ENCODE measurements at regions of chr6 and their contacts with region 1.

Region 1: GRCh38 chr6:144013486-144013909 is 5.4 kb upstream of the PLAGL1 start:
- DNase-seq: peak; percentile 70 to 73 (median 71)
- ATAC-seq: peak; percentile 81 to 89 (median 86)
- H3K4me3 ChIP-seq: no peak overlapping the region
- H3K27ac ChIP-seq: no peak overlapping the region
- H3K4me1 ChIP-seq: no peaks in the 10 kb centered on the region
- H3K27me3 ChIP-seq: no peaks in the 10 kb centered on the region
- CTCF ChIP-seq: peak; percentile 85 to 95 (median 90)
- POLR2A ChIP-seq: no peak

Region 2: DNA sequence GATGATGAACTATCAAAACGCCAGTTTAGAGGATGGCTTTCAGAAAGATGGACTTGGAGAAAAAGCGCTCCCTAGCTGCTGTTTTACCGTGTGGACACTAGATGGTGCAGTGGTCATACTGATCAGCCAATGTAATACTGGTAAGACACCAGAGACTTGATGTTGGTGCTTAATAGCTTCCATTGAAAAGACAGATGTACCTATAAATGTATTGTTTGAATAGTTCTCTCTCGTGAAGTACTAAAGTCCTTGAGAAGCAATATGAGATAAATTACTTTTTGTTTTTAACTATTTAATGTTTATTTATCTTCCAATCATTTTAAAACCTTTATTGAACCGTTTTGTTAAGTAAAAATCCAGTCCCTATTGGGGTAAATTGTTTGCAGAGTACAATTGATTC is 438.1 kb before region 1 on chr6:
- intact Hi-C with region 1: loop called in 1 of 2 experiments (anchors 5 kb)
- DNase-seq: peak in 1 of 3 donors; percentile 58
- ATAC-seq: peak; percentile 94 to 99 (median 98)
- H3K4me3 ChIP-seq: no peak overlapping the region
- H3K27ac ChIP-seq: no peak overlapping the region
- H3K4me1 ChIP-seq: no peaks in the 10 kb centered on the region
- H3K27me3 ChIP-seq: no peaks in the 10 kb centered on the region
- CTCF ChIP-seq: peak; percentile 84 to 97 (median 89)
- POLR2A ChIP-seq: no peak

Region 3: DNA sequence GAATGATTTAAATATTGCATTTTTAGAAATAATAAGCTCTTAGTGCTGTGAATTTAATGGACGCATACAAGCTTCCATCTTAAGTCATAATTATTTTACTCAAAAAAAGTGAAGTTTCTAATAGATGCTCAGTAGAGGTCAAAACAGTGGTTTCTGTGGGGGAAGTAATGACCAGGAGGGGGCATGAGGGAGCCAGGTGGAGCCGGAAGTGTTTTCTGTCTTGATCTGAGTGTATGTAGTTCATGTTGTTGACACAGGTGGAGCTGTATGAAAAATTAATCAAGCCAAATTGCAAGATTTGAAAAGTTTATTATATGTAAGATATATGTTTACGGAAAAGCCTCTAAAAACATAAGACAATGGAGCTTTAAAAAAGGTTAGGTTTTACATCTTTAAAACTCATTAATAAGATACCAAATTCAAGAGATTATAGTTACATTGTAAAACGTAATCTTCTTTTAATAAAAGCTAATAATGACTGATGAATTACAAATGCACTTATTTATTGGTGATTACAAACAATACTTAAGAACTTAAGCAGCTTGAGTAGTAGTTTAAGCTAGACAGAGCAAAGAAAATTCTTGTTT is 73.4 kb before region 1 on chr6:
- intact Hi-C with region 1: loop called in 1 of 2 experiments (anchors 5 kb)
- DNase-seq: no peak
- ATAC-seq: peak; percentile 70 to 91 (median 76)
- H3K4me3 ChIP-seq: no peak overlapping the region
- H3K27ac ChIP-seq: no peak overlapping the region
- H3K4me1 ChIP-seq: peaks cover 0 to 2% (median 0%) of the 10 kb centered on the region in 4 donors
- H3K27me3 ChIP-seq: no peaks in the 10 kb centered on the region
- CTCF ChIP-seq: peak; percentile 44 to 74 (median 66)
- POLR2A ChIP-seq: no peak

Region 4: DNA sequence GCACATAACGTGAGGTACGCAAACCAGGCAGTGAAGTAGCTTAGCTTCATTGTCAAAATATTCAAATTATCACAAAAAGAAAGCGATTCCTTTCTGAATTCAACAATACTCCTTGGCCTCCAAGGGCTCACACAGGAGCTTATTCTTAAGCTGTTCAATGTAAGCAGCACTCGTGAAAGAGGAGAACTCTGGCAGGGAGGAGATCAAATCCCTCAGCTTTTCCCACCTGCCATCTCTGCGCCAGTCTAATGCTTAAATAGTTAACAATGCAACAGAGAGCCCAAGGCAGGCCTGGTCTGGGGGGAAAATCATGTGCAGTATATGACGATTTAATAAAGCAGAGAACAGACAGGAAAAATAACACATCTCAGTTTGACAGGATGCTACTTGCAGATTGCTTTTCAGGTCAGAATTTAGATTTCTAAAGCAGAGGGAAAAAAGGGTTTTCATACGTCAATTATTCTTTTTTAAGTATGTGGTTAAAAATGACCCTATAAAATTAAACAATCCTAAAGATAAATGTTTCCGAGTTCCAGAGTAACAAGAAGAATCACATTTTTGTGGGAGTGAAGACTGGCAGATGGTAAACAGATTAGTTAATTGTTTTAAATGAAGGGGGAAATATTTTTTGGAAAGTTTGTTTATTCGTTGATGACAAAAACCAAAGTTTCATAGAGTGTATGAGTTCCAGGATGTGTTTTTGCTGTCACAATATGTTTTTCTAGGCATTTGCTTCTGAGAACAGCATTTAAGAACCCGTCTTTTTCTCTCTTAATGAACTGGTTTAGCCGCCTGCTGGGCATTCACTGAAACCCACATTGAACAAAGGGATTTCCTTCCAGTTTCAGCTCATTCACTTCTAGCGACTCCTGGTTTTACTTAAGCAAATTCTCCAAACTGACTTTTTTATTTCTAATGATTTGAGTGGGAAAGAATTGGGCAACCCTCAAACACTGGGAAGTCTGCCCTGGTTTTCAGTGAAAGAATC is 51.3 kb before region 1 on chr6:
- intact Hi-C with region 1: no loop called
- DNase-seq: no peak
- ATAC-seq: no peak
- H3K4me3 ChIP-seq: no peak overlapping the region
- H3K27ac ChIP-seq: no peak overlapping the region
- H3K4me1 ChIP-seq: no peaks in the 10 kb centered on the region
- H3K27me3 ChIP-seq: no peaks in the 10 kb centered on the region
- CTCF ChIP-seq: peak in 1 of 4 donors; percentile 10
- POLR2A ChIP-seq: no peak

Region 5: GRCh38 chr6:144362042-144363018 is 348.8 kb after region 1 on chr6:
- intact Hi-C with region 1: no loop called
- DNase-seq: no peak
- ATAC-seq: peak; percentile 79 to 86 (median 85)
- H3K4me3 ChIP-seq: no peak overlapping the region
- H3K27ac ChIP-seq: peak overlapping the region; percentile 8 to 20 (median 8)
- H3K4me1 ChIP-seq: peaks cover 0 to 10% (median 0%) of the 10 kb centered on the region in 4 donors
- H3K27me3 ChIP-seq: no peaks in the 10 kb centered on the region
- CTCF ChIP-seq: no peak
- POLR2A ChIP-seq: no peak

Measured in right lobe of liver (tissue), 6 donors.